ENCODE measurements at regions of chr7 and their contacts with region 1.

Region 1: GRCh38 chr7:125059861-125060456 is 130.3 kb upstream of the POT1 start:
- DNase-seq: no peak
- ATAC-seq: no peak
- H3K4me3 ChIP-seq: no peak overlapping the region
- H3K27ac ChIP-seq: no peak overlapping the region
- H3K4me1 ChIP-seq: peaks cover 8% of the 10 kb centered on the region
- H3K27me3 ChIP-seq: no peaks in the 10 kb centered on the region
- CTCF ChIP-seq: no peak

Region 2: DNA sequence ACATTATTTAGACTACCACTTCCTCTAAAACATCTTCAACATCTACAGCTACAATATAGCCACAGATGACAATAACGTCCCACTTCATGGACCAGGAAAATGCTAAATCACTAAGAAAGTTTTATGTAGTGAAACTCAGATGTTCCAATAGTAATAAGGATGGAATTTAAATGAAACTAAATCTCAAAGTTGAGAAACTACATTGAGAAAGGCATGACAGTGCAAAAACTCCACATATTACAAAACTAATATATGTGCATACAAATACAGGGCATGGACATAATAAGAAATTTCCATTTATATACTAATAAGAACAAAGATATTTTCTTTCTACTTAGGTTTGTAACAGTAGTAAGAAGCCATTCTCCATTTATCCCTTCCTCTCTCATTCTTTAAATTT is 161.4 kb before region 1 on chr7:
- intact Hi-C with region 1: no loop called
- DNase-seq: no peak
- ATAC-seq: no peak
- H3K4me3 ChIP-seq: no peak overlapping the region
- H3K27ac ChIP-seq: no peak overlapping the region
- H3K4me1 ChIP-seq: no peaks in the 10 kb centered on the region
- H3K27me3 ChIP-seq: no peaks in the 10 kb centered on the region
- CTCF ChIP-seq: no peak

Region 3: GRCh38 chr7:125099519-125099918 is 39.6 kb after region 1 on chr7:
- intact Hi-C with region 1: no loop called
- DNase-seq: no peak
- ATAC-seq: no peak
- H3K4me3 ChIP-seq: no peak overlapping the region
- H3K27ac ChIP-seq: no peak overlapping the region
- H3K4me1 ChIP-seq: no peaks in the 10 kb centered on the region
- H3K27me3 ChIP-seq: no peaks in the 10 kb centered on the region
- CTCF ChIP-seq: no peak

Region 4: GRCh38 chr7:125670926-125671572 is 611.1 kb after region 1 on chr7:
- intact Hi-C with region 1: loop called in 1 of 2 experiments (anchors 10 kb)
- DNase-seq: no peak
- ATAC-seq: no peak
- H3K4me3 ChIP-seq: no peak overlapping the region
- H3K27ac ChIP-seq: no peak overlapping the region
- H3K4me1 ChIP-seq: no peaks in the 10 kb centered on the region
- H3K27me3 ChIP-seq: no peaks in the 10 kb centered on the region
- CTCF ChIP-seq: peak; percentile 27